IMR-90 (cell line): ENCODE measurements at regions of chr3 and their contacts with region 1.

Region 1: GRCh38 chr3:63993653-63994079 is 29.6 kb downstream of the PSMD6 start:
- DNase-seq: peak; percentile 76
- ATAC-seq: peak; percentile 98
- H3K4me3 ChIP-seq: no peak overlapping the region
- H3K27ac ChIP-seq: no peak overlapping the region
- H3K4me1 ChIP-seq: no peaks in the 10 kb centered on the region
- H3K27me3 ChIP-seq: no peaks in the 10 kb centered on the region
- CTCF ChIP-seq: peak; percentile 91
- POLR2A ChIP-seq: no peak
- RAD21 ChIP-seq: peak; percentile 94

Region 2: GRCh38 chr3:62622553-62623193 is 1371.0 kb before region 1 on chr3:
- CTCF ChIA-PET with region 1: no interaction called
- POLR2A ChIA-PET with region 1: no interaction called
- dilution Hi-C with region 1: no loop called
- in situ Hi-C with region 1: loop called (anchors 25 kb)
- intact Hi-C with region 1: loop called (anchors 10 kb)
- DNase-seq: peak; percentile 61
- ATAC-seq: peak; percentile 71
- H3K4me3 ChIP-seq: no peak overlapping the region
- H3K27ac ChIP-seq: no peak overlapping the region
- H3K4me1 ChIP-seq: no peaks in the 10 kb centered on the region
- H3K27me3 ChIP-seq: peaks cover 14% of the 10 kb centered on the region
- CTCF ChIP-seq: peak; percentile 77
- POLR2A ChIP-seq: no peak
- RAD21 ChIP-seq: peak; percentile 72

Region 3: GRCh38 chr3:63661248-63661647 is 332.4 kb before region 1 on chr3:
- CTCF ChIA-PET with region 1: no interaction called
- POLR2A ChIA-PET with region 1: no interaction called
- dilution Hi-C with region 1: no loop called
- in situ Hi-C with region 1: no loop called
- intact Hi-C with region 1: loop called (anchors 1 kb)
- DNase-seq: no peak
- ATAC-seq: peak; percentile 40; the same call in 1 of the 2 replicates
- H3K4me3 ChIP-seq: no peak overlapping the region
- H3K27ac ChIP-seq: no peak overlapping the region
- H3K4me1 ChIP-seq: no peaks in the 10 kb centered on the region
- H3K27me3 ChIP-seq: no peaks in the 10 kb centered on the region; the same call in 1 of the 2 replicates
- CTCF ChIP-seq: peak; percentile 36
- POLR2A ChIP-seq: no peak
- RAD21 ChIP-seq: peak; percentile 28; the same call in 1 of the 2 replicates

Region 4: GRCh38 chr3:63863148-63864007 is 130.3 kb before region 1 on chr3 and contains the starts of genes ATXN7 and THOC7:
- CTCF ChIA-PET with region 1: no interaction called
- POLR2A ChIA-PET with region 1: no interaction called
- dilution Hi-C with region 1: no loop called
- in situ Hi-C with region 1: no loop called
- intact Hi-C with region 1: loop called (anchors 2 kb)
- DNase-seq: peak; percentile 38
- ATAC-seq: peak; percentile 84
- H3K4me3 ChIP-seq: peak within 1 kb of the TSS; percentile 94
- H3K27ac ChIP-seq: peak within 1 kb of the TSS; percentile 90
- H3K4me1 ChIP-seq: peaks cover 3% of the 10 kb centered on the region; the same call in 1 of the 2 replicates
- H3K27me3 ChIP-seq: no peaks in the 10 kb centered on the region
- CTCF ChIP-seq: no peak
- POLR2A ChIP-seq: no peak
- RAD21 ChIP-seq: no peak
- total RNA-seq, gene ATXN7: 11.9 and 13.6 TPM in 2 replicates
- total RNA-seq, gene THOC7: 25.8 and 51.7 TPM in 2 replicates

Region 5: DNA sequence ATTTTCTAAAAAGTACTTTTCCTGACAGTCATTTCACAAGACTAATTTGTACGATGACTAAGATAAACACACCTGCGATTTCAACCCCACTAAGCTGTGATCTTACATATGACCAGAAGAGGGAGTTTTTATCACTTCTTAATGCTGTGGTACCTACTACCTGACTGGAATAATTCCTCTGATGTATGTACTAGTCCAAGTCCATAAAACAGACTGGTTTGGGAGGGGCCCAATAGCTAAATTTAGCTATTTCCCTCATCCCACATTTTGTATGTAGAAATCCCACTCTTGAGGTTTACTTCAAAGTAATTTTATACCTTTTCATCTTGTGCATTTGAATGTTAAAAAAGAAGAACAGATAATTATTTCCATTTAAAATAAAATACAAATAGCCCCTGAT is 31.8 kb before region 1 on chr3:
- CTCF ChIA-PET with region 1: interaction called, 4 read pairs
- POLR2A ChIA-PET with region 1: no interaction called
- dilution Hi-C with region 1: no loop called
- in situ Hi-C with region 1: no loop called
- intact Hi-C with region 1: loop called (anchors 1 kb)
- DNase-seq: peak; percentile 68
- ATAC-seq: no peak
- H3K4me3 ChIP-seq: no peak overlapping the region
- H3K27ac ChIP-seq: no peak overlapping the region
- H3K4me1 ChIP-seq: peaks cover 5% of the 10 kb centered on the region
- H3K27me3 ChIP-seq: no peaks in the 10 kb centered on the region
- CTCF ChIP-seq: peak; percentile 58
- POLR2A ChIP-seq: no peak
- RAD21 ChIP-seq: peak; percentile 22; the same call in 1 of the 2 replicates